Naive thymus-derived CD8-positive, alpha-beta T cell (primary cell): ENCODE measurements at regions of chr16 and their contacts with region 1.

Region 1: DNA sequence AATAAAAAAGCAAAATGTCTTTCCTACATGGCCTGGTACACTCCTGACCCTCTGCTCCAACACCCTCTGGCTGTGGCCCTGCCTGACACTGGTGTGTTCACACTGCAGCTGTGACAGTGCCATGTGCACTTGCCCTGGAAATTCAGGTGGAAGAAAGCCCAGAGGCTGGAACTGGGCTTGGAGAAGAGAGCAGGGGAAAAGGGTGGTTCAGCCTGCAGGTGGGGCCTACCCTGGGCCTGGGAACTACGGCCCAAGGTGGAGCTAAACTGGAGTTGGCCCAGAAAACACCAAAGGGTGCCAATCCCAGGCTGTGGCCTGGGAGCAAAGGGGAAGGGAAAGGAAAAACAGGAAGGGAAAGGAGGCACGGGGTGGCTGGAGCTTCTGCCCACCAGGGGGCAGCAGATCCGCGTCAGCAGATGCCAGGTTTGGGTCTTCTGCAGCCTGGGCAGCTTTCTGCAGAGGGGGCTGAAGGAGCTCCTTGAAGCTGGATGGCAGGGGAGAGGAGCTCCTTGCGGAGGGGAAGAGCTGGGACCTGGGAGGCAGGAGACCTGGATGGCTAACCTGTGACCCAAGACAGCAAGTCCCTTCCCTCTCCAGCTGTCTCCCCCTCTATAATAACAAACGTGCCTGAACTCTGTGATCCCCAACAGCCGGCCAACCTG is 15.4 kb upstream of the CTCF start:
- DNase-seq: peak; percentile 58 to 88 (median 74)
- ATAC-seq: peak; percentile 36 to 57
- H3K4me3 Mint-ChIP-seq: peak overlapping the region; percentile 70 to 90 (median 84)
- H3K27ac Mint-ChIP-seq: peak overlapping the region; percentile 81 to 99 (median 96)
- H3K4me1 Mint-ChIP-seq: peaks cover 34 to 71% (median 60%) of the 10 kb centered on the region in 4 donors
- H3K27me3 Mint-ChIP-seq: no peaks in the 10 kb centered on the region

Region 2: GRCh38 chr16:67415872-67416793 is 130.8 kb before region 1 on chr16 and contains the start of gene ZDHHC1:
- POLR2A ChIA-PET with region 1: no interaction called
- DNase-seq: peak in 8 of 10 donors; percentile 15 to 56 (median 48)
- ATAC-seq: peak; percentile 90 to 91
- H3K4me3 Mint-ChIP-seq: peak within 1 kb of the TSS; percentile 77 to 92 (median 82)
- H3K27ac Mint-ChIP-seq: peak within 1 kb of the TSS in 7 of 10 donors; percentile 21 to 76 (median 55)
- H3K4me1 Mint-ChIP-seq: peaks cover 7 to 13% (median 8%) of the 10 kb centered on the region in 4 donors
- H3K27me3 Mint-ChIP-seq: peaks cover 14 to 34% (median 17%) of the 10 kb centered on the region in 5 donors
- polyA plus RNA-seq, gene ZDHHC1: 0.18 to 0.28 (median 0.27) TPM

Region 3: GRCh38 chr16:67660564-67661028 is 113.7 kb after region 1 on chr16 and contains the start of gene PARD6A:
- POLR2A ChIA-PET with region 1: interaction called, 41 read pairs
- DNase-seq: peak; percentile 89 to 98 (median 94)
- ATAC-seq: peak; percentile 80 to 83
- H3K4me3 Mint-ChIP-seq: peak within 1 kb of the TSS; percentile 88 to 97 (median 94)
- H3K27ac Mint-ChIP-seq: peak within 1 kb of the TSS; percentile 91 to 99 (median 97)
- H3K4me1 Mint-ChIP-seq: peaks cover 7 to 45% (median 27%) of the 10 kb centered on the region in 4 donors
- H3K27me3 Mint-ChIP-seq: no peaks in the 10 kb centered on the region
- polyA plus RNA-seq, gene PARD6A: 10.6 to 13.3 (median 11.2) TPM